IMR-90 (cell line): ENCODE measurements at regions of chr2 and their contacts with region 1.

Region 1: DNA sequence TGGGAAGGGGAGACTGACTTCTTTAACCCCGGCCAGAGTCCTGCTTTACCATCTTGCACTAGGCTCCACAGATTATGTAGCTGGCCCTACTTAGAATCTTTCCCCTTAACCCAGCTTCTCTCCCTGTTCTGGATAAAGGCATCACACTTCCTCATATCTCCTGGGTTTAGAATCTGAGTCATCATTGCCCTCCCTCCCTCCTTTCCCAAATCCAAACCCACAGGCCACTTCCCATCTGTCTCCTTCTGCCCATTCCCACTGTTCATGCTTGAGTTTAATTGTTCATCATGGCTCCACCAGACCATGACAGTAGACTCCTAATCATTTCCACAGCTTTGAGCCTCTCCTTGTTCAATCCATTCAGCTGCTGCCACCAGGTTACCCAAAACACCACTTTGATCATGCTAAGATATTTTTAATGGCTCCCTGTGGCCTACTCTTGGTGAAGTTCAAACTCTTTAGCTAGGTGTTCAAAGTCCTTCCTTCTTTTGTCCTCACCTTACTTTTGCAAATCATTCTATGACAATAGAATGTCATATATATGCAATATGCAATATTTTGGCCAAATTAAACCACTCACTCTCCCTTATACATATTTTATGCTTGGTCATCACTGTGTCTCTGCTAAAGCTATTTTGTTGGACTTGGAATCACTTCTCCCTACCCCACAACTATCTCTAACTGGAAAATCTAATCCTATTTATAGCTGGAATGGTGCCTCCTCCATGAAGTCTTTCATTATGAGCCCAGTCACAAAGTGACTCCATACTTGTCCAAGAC is 5.5 kb downstream of the PDE11A start:
- DNase-seq: no peak
- ATAC-seq: no peak
- H3K4me3 ChIP-seq: no peak overlapping the region
- H3K27ac ChIP-seq: no peak overlapping the region
- H3K4me1 ChIP-seq: no peaks in the 10 kb centered on the region
- H3K27me3 ChIP-seq: peaks cover 4% of the 10 kb centered on the region
- CTCF ChIP-seq: no peak
- POLR2A ChIP-seq: no peak
- RAD21 ChIP-seq: no peak

Region 2: GRCh38 chr2:178008636-178009289 is 58.3 kb before region 1 on chr2:
- CTCF ChIA-PET with region 1: no interaction called
- POLR2A ChIA-PET with region 1: no interaction called
- dilution Hi-C with region 1: no loop called
- in situ Hi-C with region 1: no loop called
- intact Hi-C with region 1: no loop called
- DNase-seq: peak; percentile 65
- ATAC-seq: peak; percentile 49
- H3K4me3 ChIP-seq: no peak overlapping the region
- H3K27ac ChIP-seq: no peak overlapping the region
- H3K4me1 ChIP-seq: peaks cover 3% of the 10 kb centered on the region; the same call in 1 of the 2 replicates
- H3K27me3 ChIP-seq: no peaks in the 10 kb centered on the region
- CTCF ChIP-seq: no peak
- POLR2A ChIP-seq: no peak
- RAD21 ChIP-seq: no peak

Region 3: DNA sequence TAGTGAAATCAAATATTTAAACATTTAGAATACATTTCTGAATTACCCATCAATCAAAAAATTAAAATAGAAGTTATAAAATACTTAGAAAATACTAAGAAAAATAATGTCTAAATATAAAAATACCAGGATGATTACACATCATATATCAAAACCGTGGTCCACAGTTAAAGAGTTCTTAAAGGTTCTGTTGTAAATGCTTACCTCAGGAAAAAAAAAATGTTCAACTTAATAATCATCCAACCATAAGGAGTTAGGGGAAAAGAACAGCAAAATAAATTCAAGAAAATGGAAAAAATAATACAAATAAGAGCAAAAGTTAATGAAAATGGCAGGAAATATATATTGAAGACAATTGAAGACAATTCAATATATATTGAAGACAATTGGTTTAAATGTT is 37.7 kb before region 1 on chr2:
- CTCF ChIA-PET with region 1: no interaction called
- POLR2A ChIA-PET with region 1: no interaction called
- dilution Hi-C with region 1: no loop called
- in situ Hi-C with region 1: no loop called
- intact Hi-C with region 1: no loop called
- DNase-seq: no peak
- ATAC-seq: no peak
- H3K4me3 ChIP-seq: no peak overlapping the region
- H3K27ac ChIP-seq: no peak overlapping the region
- H3K4me1 ChIP-seq: no peaks in the 10 kb centered on the region
- H3K27me3 ChIP-seq: no peaks in the 10 kb centered on the region
- CTCF ChIP-seq: no peak
- POLR2A ChIP-seq: no peak
- RAD21 ChIP-seq: no peak

Region 4: GRCh38 chr2:178257127-178257526 is 190.0 kb after region 1 on chr2:
- CTCF ChIA-PET with region 1: interaction called, 11 read pairs
- POLR2A ChIA-PET with region 1: no interaction called
- dilution Hi-C with region 1: no loop called
- in situ Hi-C with region 1: no loop called
- intact Hi-C with region 1: no loop called
- DNase-seq: no peak
- ATAC-seq: no peak
- H3K4me3 ChIP-seq: no peak overlapping the region
- H3K27ac ChIP-seq: no peak overlapping the region
- H3K4me1 ChIP-seq: peaks cover 2% of the 10 kb centered on the region; the same call in 1 of the 2 replicates
- H3K27me3 ChIP-seq: no peaks in the 10 kb centered on the region
- CTCF ChIP-seq: no peak
- POLR2A ChIP-seq: no peak
- RAD21 ChIP-seq: no peak